Activated CD4-positive, alpha-beta T cell treated with anti-CD3 and anti-CD28 coated beads for 36 hours (primary cell): ENCODE measurements at regions of chr1 and their contacts with region 1.

Region 1: GRCh38 chr1:17485280-17485679 is 45.8 kb upstream of the RCC2 start:
- DNase-seq: peak; percentile 29
- ATAC-seq: no peak
- H3K4me3 Mint-ChIP-seq: no peak overlapping the region
- H3K27ac Mint-ChIP-seq: no peak overlapping the region
- H3K4me1 Mint-ChIP-seq: peaks cover 2% of the 10 kb centered on the region
- H3K27me3 Mint-ChIP-seq: peaks cover 7% of the 10 kb centered on the region

Region 2: GRCh38 chr1:17419626-17420328 is 65.5 kb before region 1 on chr1:
- CTCF ChIA-PET with region 1: no interaction called
- POLR2A ChIA-PET with region 1: no interaction called
- intact Hi-C with region 1: loop called (anchors 2 to 10 kb)
- DNase-seq: peak; percentile 80
- ATAC-seq: peak; percentile 88
- H3K4me3 Mint-ChIP-seq: no peak overlapping the region
- H3K27ac Mint-ChIP-seq: no peak overlapping the region
- H3K4me1 Mint-ChIP-seq: no peaks in the 10 kb centered on the region
- H3K27me3 Mint-ChIP-seq: no peaks in the 10 kb centered on the region

Region 3: DNA sequence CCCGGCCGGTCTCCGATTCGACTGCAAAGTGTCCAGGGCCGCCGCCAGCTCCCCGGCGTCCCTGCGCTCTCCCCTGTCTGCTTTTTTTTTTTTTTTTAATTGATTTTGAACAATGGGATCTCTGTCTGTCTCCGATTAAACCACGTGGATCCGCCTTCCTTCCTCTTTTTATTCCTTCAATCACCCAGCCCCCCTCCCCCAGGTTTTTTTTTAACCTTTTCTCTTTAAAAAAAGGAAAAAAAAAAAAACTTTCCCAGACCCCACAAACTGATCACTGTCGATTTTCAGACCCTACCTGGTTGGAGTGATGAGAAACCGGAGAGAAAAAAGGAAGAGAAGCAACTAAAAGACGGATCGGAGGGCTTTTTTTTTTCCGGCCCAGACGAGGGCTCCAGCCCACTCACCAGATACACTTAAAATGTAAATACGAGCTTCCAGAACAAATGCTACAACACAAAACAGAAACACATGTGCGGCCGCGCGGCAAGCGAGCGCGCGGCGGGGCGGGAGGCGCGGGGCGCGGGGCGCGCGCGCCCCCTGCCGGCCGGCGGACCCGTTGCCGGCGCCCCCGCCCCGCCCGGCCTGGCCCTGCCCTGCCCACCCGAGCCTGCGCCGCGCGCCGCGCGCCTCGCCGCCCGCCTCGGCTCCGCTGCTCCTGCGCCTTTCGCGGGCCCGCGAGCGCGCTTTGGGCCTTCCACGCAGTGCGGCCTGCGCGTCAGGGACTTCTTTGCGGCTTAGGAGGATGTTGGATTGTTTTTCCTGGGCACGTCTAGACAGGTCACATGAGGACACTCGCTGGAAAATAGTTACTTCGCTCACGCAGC is 45.8 kb before region 1 on chr1 and contains the start of gene RCC2:
- CTCF ChIA-PET with region 1: no interaction called
- POLR2A ChIA-PET with region 1: no interaction called
- intact Hi-C with region 1: no loop called
- DNase-seq: peak; percentile 86
- ATAC-seq: peak; percentile 69
- H3K4me3 Mint-ChIP-seq: peak within 1 kb of the TSS; percentile 96
- H3K27ac Mint-ChIP-seq: peak within 1 kb of the TSS; percentile 96
- H3K4me1 Mint-ChIP-seq: peaks cover 45% of the 10 kb centered on the region
- H3K27me3 Mint-ChIP-seq: no peaks in the 10 kb centered on the region
- total RNA-seq, gene RCC2: 107 to 120 TPM